ENCODE measurements at regions of chr13 and their contacts with region 1.

Region 1: GRCh38 chr13:85806553-85807175 is 7.4 kb upstream of the SLITRK6 start:
- DNase-seq: no peak
- H3K4me3 ChIP-seq: no peak overlapping the region
- H3K27ac ChIP-seq: no peak overlapping the region
- H3K4me1 ChIP-seq: no peaks in the 10 kb centered on the region
- H3K27me3 ChIP-seq: no peaks in the 10 kb centered on the region
- CTCF ChIP-seq: peak; percentile 43 to 70 (median 50)
- EP300 ChIP-seq: no peak
- POLR2A ChIP-seq: no peak

Region 2: GRCh38 chr13:84896128-84896527 is 910.5 kb before region 1 on chr13:
- intact Hi-C with region 1: loop called (anchors 1 kb)
- DNase-seq: no peak
- H3K4me3 ChIP-seq: no peak overlapping the region
- H3K27ac ChIP-seq: no peak overlapping the region
- H3K4me1 ChIP-seq: no peaks in the 10 kb centered on the region
- H3K27me3 ChIP-seq: no peaks in the 10 kb centered on the region
- CTCF ChIP-seq: peak; percentile 25 to 54 (median 46)
- EP300 ChIP-seq: no peak
- POLR2A ChIP-seq: no peak

Region 3: DNA sequence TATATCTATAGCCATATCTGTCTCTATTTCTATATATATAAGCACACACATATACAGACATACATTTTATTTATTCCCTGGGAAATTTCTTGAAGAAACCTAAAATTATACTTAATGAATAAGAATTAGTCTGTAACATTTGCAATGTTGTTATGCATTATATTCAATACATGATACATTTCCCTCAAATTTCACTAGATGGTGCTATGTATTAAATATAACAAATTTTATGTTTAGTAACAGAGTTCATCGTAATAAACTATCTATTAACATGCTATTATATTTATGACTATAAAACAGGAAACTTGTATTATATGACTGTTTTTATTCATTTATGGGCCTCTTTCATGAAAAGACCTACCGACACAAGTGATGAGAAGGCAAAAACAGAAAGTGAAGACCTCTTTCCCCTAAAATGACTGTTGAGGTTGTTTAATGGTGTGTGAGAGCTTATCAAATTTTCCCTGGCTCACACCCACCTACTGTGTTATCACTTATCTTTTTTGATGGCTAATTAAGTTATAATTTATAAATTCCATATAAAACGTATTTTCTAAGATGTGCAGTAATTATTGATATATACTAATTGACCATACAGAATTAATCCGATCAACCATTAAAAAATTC is 889.3 kb before region 1 on chr13:
- intact Hi-C with region 1: loop called (anchors 2 kb)
- DNase-seq: no peak
- H3K4me3 ChIP-seq: no peak overlapping the region
- H3K27ac ChIP-seq: no peak overlapping the region
- H3K4me1 ChIP-seq: no peaks in the 10 kb centered on the region
- H3K27me3 ChIP-seq: no peaks in the 10 kb centered on the region
- CTCF ChIP-seq: peak in 3 of 4 experiments; percentile 19 to 46 (median 40)
- EP300 ChIP-seq: no peak
- POLR2A ChIP-seq: no peak

Region 4: DNA sequence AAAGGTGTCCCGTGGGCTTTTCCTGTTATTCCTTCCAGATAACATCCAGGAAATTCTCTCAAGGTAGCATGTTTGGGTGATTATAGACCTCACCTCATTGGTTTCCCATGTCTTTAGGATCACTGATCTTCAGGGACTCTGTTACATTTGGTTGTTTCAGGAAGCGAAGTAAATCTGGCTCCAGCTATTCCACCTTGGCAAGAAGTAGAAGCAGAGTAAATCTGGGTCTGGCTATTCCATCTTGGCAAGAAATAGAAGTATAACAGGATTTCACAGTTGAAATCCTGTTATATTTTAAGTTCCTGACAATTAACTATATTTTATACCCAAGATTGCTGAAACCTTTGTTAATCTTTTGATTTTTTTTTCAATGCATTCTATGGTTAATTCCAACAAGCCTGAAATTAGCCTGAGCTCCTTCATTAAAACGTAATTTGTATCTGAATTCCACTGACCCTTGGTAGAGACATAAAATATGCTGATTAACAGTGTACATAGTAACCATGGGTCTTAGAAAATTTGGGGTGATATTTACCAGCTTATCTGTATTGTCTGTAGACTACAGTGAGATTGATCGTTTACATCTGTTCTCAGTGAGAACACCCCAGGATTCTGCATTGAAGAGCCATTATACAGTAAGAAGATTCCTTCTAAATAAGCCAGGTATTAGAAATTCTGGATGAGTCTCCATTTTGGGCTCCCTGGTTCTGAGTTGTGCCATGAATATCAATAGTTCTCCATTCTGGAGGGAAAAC is 260.1 kb after region 1 on chr13:
- intact Hi-C with region 1: no loop called
- DNase-seq: no peak
- H3K4me3 ChIP-seq: no peak overlapping the region
- H3K27ac ChIP-seq: no peak overlapping the region
- H3K4me1 ChIP-seq: no peaks in the 10 kb centered on the region
- H3K27me3 ChIP-seq: no peaks in the 10 kb centered on the region
- CTCF ChIP-seq: no peak
- EP300 ChIP-seq: no peak
- POLR2A ChIP-seq: no peak